Activated naive CD8-positive, alpha-beta T cell treated with anti-CD3 and anti-CD28 coated beads, Interleukin-2, amount 10 ng/mL, durations not matched to agents 7 days and 5 days (primary cell): ENCODE measurements at regions of chr19 and their contacts with region 1.

Region 1: GRCh38 chr19:15418588-15419412 is at the start of gene AKAP8L:
- DNase-seq: peak; percentile 96
- ATAC-seq: peak; percentile 94
- H3K4me3 Mint-ChIP-seq: peak within 1 kb of the TSS; percentile 98
- H3K27ac Mint-ChIP-seq: peak within 1 kb of the TSS; percentile 100
- H3K4me1 Mint-ChIP-seq: peaks cover 25% of the 10 kb centered on the region
- H3K27me3 Mint-ChIP-seq: no peaks in the 10 kb centered on the region
- total RNA-seq, gene AKAP8L: 146 to 149 TPM

Region 2: GRCh38 chr19:15379083-15379995 is 39.5 kb before region 1 on chr19 and contains the start of gene AKAP8:
- POLR2A ChIA-PET with region 1: interaction called, 88 read pairs
- DNase-seq: peak; percentile 98
- ATAC-seq: peak; percentile 88
- H3K4me3 Mint-ChIP-seq: peak within 1 kb of the TSS; percentile 98
- H3K27ac Mint-ChIP-seq: peak within 1 kb of the TSS; percentile 100
- H3K4me1 Mint-ChIP-seq: peaks cover 22% of the 10 kb centered on the region
- H3K27me3 Mint-ChIP-seq: no peaks in the 10 kb centered on the region
- total RNA-seq, gene AKAP8: 57.4 to 59.1 TPM

Region 3: GRCh38 chr19:15432629-15433518 is 14.1 kb after region 1 on chr19:
- POLR2A ChIA-PET with region 1: interaction called, 50 read pairs
- DNase-seq: peak; percentile 98
- ATAC-seq: peak; percentile 76
- H3K4me3 Mint-ChIP-seq: peak overlapping the region; percentile 93
- H3K27ac Mint-ChIP-seq: peak overlapping the region; percentile 96
- H3K4me1 Mint-ChIP-seq: peaks cover 22% of the 10 kb centered on the region
- H3K27me3 Mint-ChIP-seq: no peaks in the 10 kb centered on the region

Region 4: GRCh38 chr19:15449620-15450527 is 31.1 kb after region 1 on chr19 and contains the start of gene WIZ:
- POLR2A ChIA-PET with region 1: interaction called, 12 read pairs
- DNase-seq: peak; percentile 92
- ATAC-seq: peak; percentile 68
- H3K4me3 Mint-ChIP-seq: peak within 1 kb of the TSS; percentile 83
- H3K27ac Mint-ChIP-seq: peak within 1 kb of the TSS; percentile 89
- H3K4me1 Mint-ChIP-seq: peaks cover 25% of the 10 kb centered on the region
- H3K27me3 Mint-ChIP-seq: no peaks in the 10 kb centered on the region
- total RNA-seq, gene WIZ: 28.4 to 29.3 TPM

Region 5: DNA sequence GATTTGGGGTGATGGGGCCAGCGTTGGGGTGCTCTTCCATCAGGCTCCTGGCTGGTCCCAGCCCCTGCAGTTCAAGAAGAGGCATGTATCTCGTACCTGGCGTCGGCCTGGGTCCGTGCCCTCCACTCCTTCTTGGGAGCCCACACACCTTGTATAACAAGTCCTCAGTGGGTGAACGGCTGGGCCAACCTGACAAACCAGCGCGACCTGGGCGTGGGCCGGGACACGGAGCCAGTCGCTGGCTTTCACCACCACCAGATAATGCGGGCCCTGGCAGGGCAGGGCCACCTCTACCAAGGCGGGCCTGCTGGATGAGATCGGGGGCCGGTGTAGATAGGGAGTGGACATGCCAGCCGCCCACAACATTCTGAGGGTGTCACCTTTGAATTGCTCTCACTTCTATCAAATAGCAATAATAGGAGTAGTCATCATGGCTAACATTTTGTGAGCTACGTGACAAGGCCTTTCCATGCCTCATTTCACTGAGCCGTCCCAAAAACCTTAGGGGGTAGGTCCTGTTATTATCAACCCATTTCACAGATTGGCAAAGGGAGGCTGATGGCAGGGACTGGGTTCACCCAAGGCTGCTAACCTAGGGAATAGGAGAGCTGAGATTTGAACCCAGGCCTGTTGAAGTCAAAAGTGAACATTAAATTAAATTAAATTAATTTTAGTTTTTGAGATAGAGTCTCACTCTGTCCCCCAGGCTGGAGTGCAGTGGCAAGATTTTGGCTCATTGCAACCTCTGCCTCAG is 93.0 kb after region 1 on chr19:
- POLR2A ChIA-PET with region 1: interaction called, 10 read pairs
- DNase-seq: no peak
- ATAC-seq: no peak
- H3K4me3 Mint-ChIP-seq: no peak overlapping the region
- H3K27ac Mint-ChIP-seq: no peak overlapping the region
- H3K4me1 Mint-ChIP-seq: peaks cover 32% of the 10 kb centered on the region
- H3K27me3 Mint-ChIP-seq: peaks cover 23% of the 10 kb centered on the region

Region 6: DNA sequence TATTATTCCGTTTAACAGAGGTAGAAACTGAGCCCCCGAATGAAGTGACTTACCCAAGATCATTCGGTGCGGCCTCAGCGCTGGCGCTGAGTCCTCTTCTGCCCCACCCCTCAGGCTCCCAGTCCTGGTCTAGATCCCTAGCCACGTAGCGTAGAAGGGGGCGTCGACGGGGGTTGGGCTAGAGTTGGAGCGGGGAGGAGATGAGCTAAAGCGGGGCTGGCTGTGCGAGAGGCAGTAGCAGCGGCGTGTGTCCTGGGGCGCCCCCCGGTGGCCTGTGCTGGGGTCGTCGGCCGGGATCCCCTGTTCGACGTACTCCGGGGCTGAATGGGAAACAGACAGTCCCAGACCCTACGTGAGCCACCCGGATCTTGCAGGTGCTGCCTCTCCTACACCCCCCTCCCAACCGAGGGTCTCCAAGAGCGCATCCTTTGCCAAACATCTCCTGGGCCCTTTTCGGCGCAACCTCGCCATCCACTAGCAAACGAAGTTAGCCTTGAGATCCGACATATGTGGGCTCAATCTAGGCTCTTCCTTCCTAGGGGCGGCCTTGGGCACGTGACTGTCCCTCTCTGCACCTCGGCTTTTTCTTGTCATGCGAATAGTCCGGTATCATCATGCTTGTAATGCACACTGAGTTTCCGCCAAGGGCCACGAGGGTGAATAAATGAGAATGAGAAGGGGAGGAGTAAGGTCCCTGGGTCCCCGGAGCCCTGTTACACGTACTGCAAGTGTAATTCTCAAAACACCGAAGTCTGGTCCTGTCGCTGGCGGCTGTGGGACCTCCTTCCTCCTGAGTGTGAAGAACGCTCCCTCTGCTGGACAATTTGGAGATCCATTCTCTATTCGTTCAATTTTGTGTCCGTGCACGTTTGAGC is 137.2 kb after region 1 on chr19:
- POLR2A ChIA-PET with region 1: interaction called, 29 read pairs
- DNase-seq: peak; percentile 99
- ATAC-seq: peak; percentile 84
- H3K4me3 Mint-ChIP-seq: peak overlapping the region; percentile 92
- H3K27ac Mint-ChIP-seq: peak overlapping the region; percentile 86
- H3K4me1 Mint-ChIP-seq: peaks cover 18% of the 10 kb centered on the region
- H3K27me3 Mint-ChIP-seq: peaks cover 3% of the 10 kb centered on the region